ENCODE measurements at regions of chr1 and their contacts with region 1.

Region 1: GRCh38 chr1:33007190-33008050 is 29.3 kb downstream of the AK2 start:
- DNase-seq: peak; percentile 48 to 70 (median 60)
- H3K4me3 ChIP-seq: no peak overlapping the region
- H3K27ac ChIP-seq: no peak overlapping the region
- H3K4me1 ChIP-seq: no peaks in the 10 kb centered on the region
- H3K27me3 ChIP-seq: no peaks in the 10 kb centered on the region

Region 2: GRCh38 chr1:32939655-32940371 is 67.6 kb before region 1 on chr1:
- CTCF ChIA-PET with region 1: interaction called, 200 read pairs
- POLR2A ChIA-PET with region 1: no interaction called
- DNase-seq: peak in 2 of 3 donors; percentile 33 to 43
- H3K4me3 ChIP-seq: no peak overlapping the region
- H3K27ac ChIP-seq: no peak overlapping the region
- H3K4me1 ChIP-seq: peaks cover 0 to 17% (median 11%) of the 10 kb centered on the region in 4 experiments
- H3K27me3 ChIP-seq: no peaks in the 10 kb centered on the region

Measured in common myeloid progenitor, CD34-positive (primary cell).